ENCODE measurements at regions of chr1 and their contacts with region 1.

Region 1: DNA sequence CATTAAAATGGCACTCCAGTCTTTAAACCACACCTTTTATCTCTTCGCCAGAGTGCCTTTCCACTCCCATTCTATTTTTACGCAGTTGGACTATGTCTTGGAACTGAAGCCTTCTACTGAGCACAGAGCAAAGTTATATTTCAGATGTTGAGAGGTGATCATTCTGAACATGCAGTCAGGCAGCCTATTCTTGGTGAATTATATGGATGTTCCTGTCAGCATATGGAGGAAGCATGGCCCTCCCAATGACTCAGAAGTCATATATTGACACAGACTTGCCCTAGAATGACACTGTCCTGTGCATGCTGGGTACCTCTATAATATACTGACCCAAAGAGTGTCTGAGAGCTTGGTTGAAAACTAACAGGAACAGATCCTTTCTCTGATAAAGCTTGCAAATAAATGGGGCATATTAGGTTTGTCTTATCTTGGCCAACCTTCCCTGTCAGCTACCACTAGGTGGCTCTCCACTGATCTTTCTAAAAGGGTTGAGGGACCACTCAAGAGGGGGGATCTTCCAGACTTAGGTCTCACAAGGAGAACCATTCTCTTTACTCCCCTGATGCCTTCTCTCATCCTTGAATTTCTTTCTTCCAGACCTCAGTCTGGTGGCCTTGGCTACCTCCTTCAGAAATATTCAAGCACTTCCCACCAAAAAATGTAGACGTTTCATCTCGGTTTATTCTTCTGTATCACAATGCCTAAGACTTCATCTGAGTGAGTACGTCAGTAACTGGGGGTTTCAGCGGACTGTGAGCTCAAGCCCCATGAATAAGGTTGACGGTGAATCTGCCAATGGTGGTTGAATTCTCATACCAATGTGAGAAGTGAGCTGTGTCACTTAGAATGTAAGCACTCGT is 11.8 kb upstream of the ALG14 start:
- DNase-seq: peak; percentile 29
- ATAC-seq: peak; percentile 51
- H3K4me3 Mint-ChIP-seq: no peak overlapping the region
- H3K27ac Mint-ChIP-seq: no peak overlapping the region
- H3K4me1 Mint-ChIP-seq: peaks cover 4% of the 10 kb centered on the region
- H3K27me3 Mint-ChIP-seq: peaks cover 10% of the 10 kb centered on the region

Region 2: GRCh38 chr1:95072532-95073419 is 11.8 kb before region 1 on chr1 and contains the start of gene ALG14:
- CTCF ChIA-PET with region 1: interaction called, 22 read pairs
- POLR2A ChIA-PET with region 1: interaction called, 3 read pairs
- DNase-seq: peak; percentile 95
- ATAC-seq: peak; percentile 98
- H3K4me3 Mint-ChIP-seq: peak within 1 kb of the TSS; percentile 96
- H3K27ac Mint-ChIP-seq: peak within 1 kb of the TSS; percentile 95
- H3K4me1 Mint-ChIP-seq: peaks cover 14% of the 10 kb centered on the region
- H3K27me3 Mint-ChIP-seq: no peaks in the 10 kb centered on the region
- total RNA-seq, gene ALG14: 2.7 to 5.8 TPM

Region 3: DNA sequence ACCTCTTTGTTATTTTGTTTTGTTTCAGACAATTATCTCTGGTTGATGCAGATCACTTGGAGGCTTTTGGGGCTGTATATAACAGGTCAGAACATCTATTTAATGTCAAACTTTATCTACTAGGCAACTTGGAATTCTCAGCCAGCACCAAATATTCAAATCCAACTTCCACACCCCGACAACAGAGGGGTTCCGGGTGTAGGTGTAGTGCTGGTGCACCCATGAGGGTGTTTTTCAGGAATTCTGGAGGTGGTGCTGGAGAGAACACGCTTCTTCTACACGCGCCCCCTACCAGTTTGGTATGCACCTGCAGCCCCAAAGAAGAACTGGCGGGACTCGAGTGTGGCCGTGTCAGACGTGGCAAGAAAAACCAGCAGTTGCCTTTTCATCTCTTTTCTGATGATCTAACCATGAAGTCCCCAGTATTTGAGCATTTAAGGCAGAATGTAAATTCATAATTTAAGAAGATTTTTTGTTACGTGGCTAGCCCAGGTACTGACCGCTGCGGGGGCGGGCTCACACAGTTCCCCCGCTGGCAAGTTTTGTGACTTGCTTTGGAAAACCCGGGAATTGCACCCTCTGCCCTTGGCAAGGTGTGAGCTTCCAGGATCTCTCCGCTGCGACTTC is 32.1 kb after region 1 on chr1:
- CTCF ChIA-PET with region 1: interaction called, 18 read pairs
- POLR2A ChIA-PET with region 1: no interaction called
- DNase-seq: peak; percentile 56
- ATAC-seq: peak; percentile 55
- H3K4me3 Mint-ChIP-seq: peak overlapping the region; percentile 72
- H3K27ac Mint-ChIP-seq: no peak overlapping the region
- H3K4me1 Mint-ChIP-seq: peaks cover 3% of the 10 kb centered on the region
- H3K27me3 Mint-ChIP-seq: peaks cover 52% of the 10 kb centered on the region

Measured in activated CD8-positive, alpha-beta T cell treated with anti-CD3 and anti-CD28 coated beads, Interleukin-2, amount 10 ng/mL, durations not matched to agents 7 days and 5 days (primary cell).